Dorsolateral prefrontal cortex (tissue), 120 donors: ENCODE measurements at regions of chr17 and their contacts with region 1.

Region 1: GRCh38 chr17:20300436-20300934 is 166.9 kb downstream of the LGALS9B start:
- DNase-seq: peak in 5 of 10 donors; percentile 41 to 68 (median 50)
- H3K4me3 ChIP-seq: no peak overlapping the region
- H3K27ac ChIP-seq: peak overlapping the region; percentile 15 to 89 (median 78)
- H3K27me3 ChIP-seq: no peaks in the 10 kb centered on the region
- CTCF ChIP-seq: no peak

Region 2: GRCh38 chr17:20235747-20236146 is 64.7 kb before region 1 on chr17:
- intact Hi-C with region 1: loop called in 1 of 2 experiments (anchors 5 kb)
- DNase-seq: peak in 5 of 10 donors; percentile 22 to 65 (median 55)
- H3K4me3 ChIP-seq: no peak overlapping the region
- H3K27ac ChIP-seq: peak overlapping the region; percentile 33 to 96 (median 84)
- H3K27me3 ChIP-seq: no peaks in the 10 kb centered on the region
- CTCF ChIP-seq: peak in 11 of 56 donors; percentile 10 to 40 (median 17)

Region 3: DNA sequence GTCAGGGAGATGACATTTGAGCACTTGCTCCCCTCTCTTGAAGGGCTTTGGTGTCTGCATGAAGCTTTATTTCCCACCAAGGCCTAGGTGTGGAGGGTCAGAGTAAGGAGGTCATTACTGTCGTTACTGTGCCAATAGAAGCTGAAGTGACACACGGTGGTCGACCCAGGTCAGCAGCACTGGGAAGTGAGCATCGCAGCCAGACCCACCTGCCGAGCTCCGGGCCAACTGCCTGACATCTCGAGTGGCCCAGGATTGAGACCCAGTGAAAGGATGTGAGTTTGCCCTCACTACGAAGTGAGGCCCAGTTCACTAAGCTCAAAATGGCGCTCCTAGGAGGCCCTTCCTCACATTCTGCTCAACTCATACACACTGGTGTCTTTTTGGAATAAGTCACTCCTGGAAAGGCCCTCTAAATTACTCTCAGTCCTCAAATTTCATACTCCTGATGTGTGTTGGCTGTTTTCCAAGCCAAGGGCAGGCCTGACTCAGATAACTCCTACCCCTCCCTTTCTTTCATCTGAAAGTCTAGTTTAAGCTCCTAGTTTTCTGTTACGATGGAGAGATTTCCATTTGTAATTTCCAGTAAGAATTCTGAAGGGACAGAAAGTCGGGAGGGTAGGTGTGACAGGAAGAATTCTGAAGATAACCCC is 33.6 kb before region 1 on chr17:
- intact Hi-C with region 1: loop called in 1 of 2 experiments (anchors 2 kb)
- DNase-seq: no peak
- H3K4me3 ChIP-seq: no peak overlapping the region
- H3K27ac ChIP-seq: peak overlapping the region in 44 of 59 donors; percentile 4 to 83 (median 60)
- H3K27me3 ChIP-seq: no peaks in the 10 kb centered on the region
- CTCF ChIP-seq: no peak

Region 4: DNA sequence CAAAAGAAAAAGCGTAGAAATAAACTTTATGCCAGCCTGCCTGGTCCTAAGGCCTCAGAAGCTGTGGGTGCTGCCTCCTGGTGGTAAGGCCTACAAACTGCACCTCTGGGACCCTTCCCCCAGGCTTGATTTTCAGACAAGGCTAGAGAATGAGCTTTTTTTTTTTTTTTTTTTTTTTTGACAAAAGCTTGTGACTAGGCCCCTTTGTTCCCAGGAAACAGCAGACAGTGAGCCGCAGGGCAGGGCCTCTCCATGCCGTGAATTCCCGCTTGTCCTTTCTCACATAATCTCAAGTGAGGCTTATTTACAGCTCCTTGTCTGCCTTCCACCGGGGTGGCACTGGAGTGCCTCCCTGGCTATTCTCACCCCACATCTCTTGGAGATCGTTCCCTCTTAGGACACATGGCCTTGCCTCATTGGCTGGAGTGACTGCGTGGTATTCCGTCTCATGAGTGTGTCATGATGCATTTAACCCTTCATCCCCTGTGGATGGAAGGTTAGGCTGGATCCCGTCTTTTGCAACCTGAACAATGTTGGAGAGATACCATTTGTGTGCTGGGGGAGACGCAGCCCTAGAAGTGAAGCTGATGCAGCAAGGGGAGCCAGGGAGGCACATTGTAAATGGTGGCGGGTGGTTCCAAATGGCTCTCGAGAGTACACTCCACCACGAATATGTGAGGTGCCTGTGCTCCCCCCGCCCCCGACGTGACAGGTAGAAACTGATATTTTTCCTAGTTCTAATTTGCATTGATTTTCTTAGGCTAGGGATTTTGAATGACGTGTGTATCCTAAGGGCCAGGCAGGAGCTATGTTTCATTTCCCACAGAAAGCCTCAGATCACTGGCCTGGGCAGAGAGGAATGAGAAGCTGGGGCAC is 692.7 kb after region 1 on chr17:
- intact Hi-C with region 1: no loop called
- DNase-seq: peak; percentile 49 to 91 (median 78)
- H3K4me3 ChIP-seq: peak overlapping the region in 33 of 59 donors; percentile 8 to 59 (median 30)
- H3K27ac ChIP-seq: peak overlapping the region; percentile 5 to 98 (median 88)
- H3K27me3 ChIP-seq: no peaks in the 10 kb centered on the region
- CTCF ChIP-seq: peak; percentile 70 to 94 (median 90)